Heart right ventricle (tissue), 16 donors: ENCODE measurements at regions of chr5 and their contacts with region 1.

Region 1: GRCh38 chr5:158695595-158696330 is 404.0 kb downstream of the EBF1 start:
- DNase-seq: peak; percentile 78 to 79
- ATAC-seq: peak; percentile 70 to 88 (median 82)
- H3K4me3 ChIP-seq: no peak overlapping the region
- H3K27ac ChIP-seq: peak overlapping the region in 7 of 10 donors; percentile 4 to 69 (median 35)
- H3K4me1 ChIP-seq: peaks cover 0 to 62% (median 32%) of the 10 kb centered on the region in 9 donors
- H3K27me3 ChIP-seq: peaks cover 0 to 5% (median 0%) of the 10 kb centered on the region in 7 donors
- CTCF ChIP-seq: peak; percentile 93 to 99 (median 98)

Region 2: GRCh38 chr5:158174918-158175851 is 520.6 kb before region 1 on chr5:
- intact Hi-C with region 1: loop called (anchors 2 to 10 kb)
- DNase-seq: peak; percentile 62 to 87
- ATAC-seq: peak; percentile 75 to 95 (median 92)
- H3K4me3 ChIP-seq: no peak overlapping the region
- H3K27ac ChIP-seq: peak overlapping the region in 9 of 10 donors; percentile 4 to 80 (median 69)
- H3K4me1 ChIP-seq: peaks cover 0 to 27% (median 14%) of the 10 kb centered on the region in 9 donors
- H3K27me3 ChIP-seq: no peaks in the 10 kb centered on the region
- CTCF ChIP-seq: peak; percentile 55 to 89 (median 81)

Region 3: DNA sequence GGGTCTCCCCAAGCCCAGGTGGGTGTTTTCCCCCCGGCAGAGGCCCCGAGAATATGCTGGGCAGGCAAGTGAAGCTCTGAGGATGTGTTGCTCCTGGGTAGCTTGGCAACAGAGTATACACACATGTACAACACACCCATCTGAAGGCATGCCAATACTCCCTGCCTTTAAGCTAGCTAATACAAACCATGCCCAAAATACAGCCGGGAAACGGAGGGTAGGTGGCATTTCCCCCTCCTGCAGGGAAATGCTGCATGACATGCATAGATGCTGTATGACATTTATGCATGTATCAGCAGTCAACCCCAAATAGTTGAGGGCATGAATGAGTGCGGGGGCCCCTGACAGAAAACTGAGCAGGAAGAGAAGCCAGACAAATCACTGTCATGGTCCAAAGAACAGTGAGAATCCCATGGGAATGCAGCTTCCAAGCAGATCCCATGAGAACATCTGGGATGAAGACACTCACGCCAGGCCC is 210.1 kb before region 1 on chr5:
- intact Hi-C with region 1: loop called in 2 of 10 experiments (anchors 10 kb)
- DNase-seq: peak in 1 of 2 donors; percentile 58
- ATAC-seq: peak in 7 of 8 donors; percentile 56 to 77 (median 72)
- H3K4me3 ChIP-seq: no peak overlapping the region
- H3K27ac ChIP-seq: peak overlapping the region; percentile 31 to 81 (median 61)
- H3K4me1 ChIP-seq: peaks cover 2 to 69% (median 24%) of the 10 kb centered on the region in 9 donors
- H3K27me3 ChIP-seq: no peaks in the 10 kb centered on the region
- CTCF ChIP-seq: no peak

Region 4: GRCh38 chr5:158553195-158553961 is 142.4 kb before region 1 on chr5:
- intact Hi-C with region 1: no loop called
- DNase-seq: peak in 1 of 2 donors; percentile 33
- ATAC-seq: peak; percentile 27 to 78 (median 62)
- H3K4me3 ChIP-seq: no peak overlapping the region
- H3K27ac ChIP-seq: peak overlapping the region in 9 of 10 donors; percentile 42 to 73 (median 63)
- H3K4me1 ChIP-seq: peaks cover 0 to 21% (median 0%) of the 10 kb centered on the region in 9 donors
- H3K27me3 ChIP-seq: no peaks in the 10 kb centered on the region
- CTCF ChIP-seq: no peak

Region 5: GRCh38 chr5:158770506-158770905 is 74.7 kb after region 1 on chr5:
- intact Hi-C with region 1: loop called in 1 of 10 experiments (anchors 5 kb)
- DNase-seq: no peak
- ATAC-seq: peak in 1 of 8 donors; percentile 51
- H3K4me3 ChIP-seq: no peak overlapping the region
- H3K27ac ChIP-seq: peak overlapping the region in 4 of 10 donors; percentile 3 to 33 (median 10)
- H3K4me1 ChIP-seq: peaks cover 0 to 58% (median 31%) of the 10 kb centered on the region in 9 donors
- H3K27me3 ChIP-seq: no peaks in the 10 kb centered on the region
- CTCF ChIP-seq: peak in 3 of 9 donors; percentile 12 to 21 (median 18)

Region 6: GRCh38 chr5:158819840-158820620 is 124.3 kb after region 1 on chr5:
- intact Hi-C with region 1: no loop called
- DNase-seq: no peak
- ATAC-seq: peak in 1 of 8 donors; percentile 71
- H3K4me3 ChIP-seq: no peak overlapping the region
- H3K27ac ChIP-seq: peak overlapping the region in 1 of 10 donors; percentile 26
- H3K4me1 ChIP-seq: peaks cover 0 to 10% (median 0%) of the 10 kb centered on the region in 9 donors
- H3K27me3 ChIP-seq: no peaks in the 10 kb centered on the region
- CTCF ChIP-seq: no peak

Region 7: GRCh38 chr5:158832096-158832685 is 136.4 kb after region 1 on chr5:
- intact Hi-C with region 1: no loop called
- DNase-seq: no peak
- ATAC-seq: no peak
- H3K4me3 ChIP-seq: no peak overlapping the region
- H3K27ac ChIP-seq: no peak overlapping the region
- H3K4me1 ChIP-seq: no peaks in the 10 kb centered on the region
- H3K27me3 ChIP-seq: no peaks in the 10 kb centered on the region
- CTCF ChIP-seq: no peak

Region 8: GRCh38 chr5:159106569-159107282 is 411.0 kb after region 1 on chr5:
- intact Hi-C with region 1: loop called (anchors 1 to 5 kb)
- DNase-seq: peak; percentile 81 to 85
- ATAC-seq: peak; percentile 84 to 93 (median 90)
- H3K4me3 ChIP-seq: peak overlapping the region in 9 of 10 donors; percentile 1 to 55 (median 41)
- H3K27ac ChIP-seq: peak overlapping the region in 4 of 10 donors; percentile 1 to 35 (median 20)
- H3K4me1 ChIP-seq: peaks cover 0 to 51% (median 27%) of the 10 kb centered on the region in 9 donors
- H3K27me3 ChIP-seq: peaks cover 4 to 82% (median 48%) of the 10 kb centered on the region in 7 donors
- CTCF ChIP-seq: peak; percentile 71 to 97 (median 96)